Activated CD8-positive, alpha-beta T cell treated with anti-CD3 and anti-CD28 coated beads, Interleukin-2, amount 10 ng/mL, durations not matched to agents 7 days and 5 days (primary cell): ENCODE measurements at regions of chr6 and their contacts with region 1.

Region 1: GRCh38 chr6:90179190-90180169 is 117.2 kb downstream of the BACH2 start:
- DNase-seq: peak; percentile 57
- ATAC-seq: no peak
- H3K4me3 Mint-ChIP-seq: no peak overlapping the region
- H3K27ac Mint-ChIP-seq: peak overlapping the region; percentile 92
- H3K4me1 Mint-ChIP-seq: peaks cover 84% of the 10 kb centered on the region
- H3K27me3 Mint-ChIP-seq: no peaks in the 10 kb centered on the region

Region 2: DNA sequence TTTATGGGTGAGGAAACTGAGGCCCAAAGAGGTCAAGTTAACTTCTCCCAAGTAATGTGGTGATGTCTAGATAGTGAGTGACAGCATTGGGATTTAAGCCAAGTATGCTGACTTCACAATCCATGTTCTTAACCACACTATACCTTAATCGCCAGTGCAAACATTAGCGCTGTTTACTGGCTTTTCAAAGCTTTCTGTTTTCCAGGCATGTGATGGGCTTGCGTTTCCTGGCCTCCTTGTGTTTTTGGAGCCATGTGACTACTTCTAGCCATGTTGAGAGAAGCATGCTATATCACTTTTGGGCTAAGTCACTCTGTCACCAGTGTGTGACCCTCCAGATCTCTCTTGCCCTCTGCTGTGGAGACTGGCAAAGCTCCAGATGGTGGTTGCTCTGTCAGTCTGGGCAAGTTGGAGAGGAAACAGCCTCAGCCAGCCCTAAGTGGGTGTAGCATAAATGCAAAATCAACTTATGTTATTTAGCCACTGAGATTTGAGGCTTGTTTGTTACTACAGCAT is 669.7 kb before region 1 on chr6:
- CTCF ChIA-PET with region 1: no interaction called
- POLR2A ChIA-PET with region 1: no interaction called
- DNase-seq: no peak
- ATAC-seq: no peak
- H3K4me3 Mint-ChIP-seq: no peak overlapping the region
- H3K27ac Mint-ChIP-seq: no peak overlapping the region
- H3K4me1 Mint-ChIP-seq: no peaks in the 10 kb centered on the region
- H3K27me3 Mint-ChIP-seq: peaks cover 3% of the 10 kb centered on the region

Region 3: GRCh38 chr6:90098001-90098531 is 81.4 kb before region 1 on chr6:
- CTCF ChIA-PET with region 1: interaction called, 14 read pairs
- POLR2A ChIA-PET with region 1: no interaction called
- DNase-seq: peak; percentile 57
- ATAC-seq: peak; percentile 29
- H3K4me3 Mint-ChIP-seq: peak overlapping the region; percentile 6
- H3K27ac Mint-ChIP-seq: peak overlapping the region; percentile 77
- H3K4me1 Mint-ChIP-seq: peaks cover 81% of the 10 kb centered on the region
- H3K27me3 Mint-ChIP-seq: no peaks in the 10 kb centered on the region

Region 4: GRCh38 chr6:90107771-90108282 is 71.7 kb before region 1 on chr6:
- CTCF ChIA-PET with region 1: interaction called, 32 read pairs
- POLR2A ChIA-PET with region 1: no interaction called
- DNase-seq: peak; percentile 52
- ATAC-seq: peak; percentile 50
- H3K4me3 Mint-ChIP-seq: peak overlapping the region; percentile 30
- H3K27ac Mint-ChIP-seq: peak overlapping the region; percentile 60
- H3K4me1 Mint-ChIP-seq: peaks cover 93% of the 10 kb centered on the region
- H3K27me3 Mint-ChIP-seq: no peaks in the 10 kb centered on the region

Region 5: GRCh38 chr6:90121982-90122381 is 57.5 kb before region 1 on chr6:
- CTCF ChIA-PET with region 1: interaction called, 32 read pairs
- POLR2A ChIA-PET with region 1: interaction called, 3 read pairs
- DNase-seq: no peak
- ATAC-seq: no peak
- H3K4me3 Mint-ChIP-seq: no peak overlapping the region
- H3K27ac Mint-ChIP-seq: peak overlapping the region; percentile 70
- H3K4me1 Mint-ChIP-seq: peaks cover 69% of the 10 kb centered on the region
- H3K27me3 Mint-ChIP-seq: no peaks in the 10 kb centered on the region

Region 6: GRCh38 chr6:90156861-90157260 is 22.6 kb before region 1 on chr6:
- CTCF ChIA-PET with region 1: interaction called, 15 read pairs
- POLR2A ChIA-PET with region 1: interaction called, 4 read pairs
- DNase-seq: peak; percentile 68
- ATAC-seq: peak; percentile 95
- H3K4me3 Mint-ChIP-seq: peak overlapping the region; percentile 37
- H3K27ac Mint-ChIP-seq: peak overlapping the region; percentile 84
- H3K4me1 Mint-ChIP-seq: peaks cover 70% of the 10 kb centered on the region
- H3K27me3 Mint-ChIP-seq: no peaks in the 10 kb centered on the region

Region 7: DNA sequence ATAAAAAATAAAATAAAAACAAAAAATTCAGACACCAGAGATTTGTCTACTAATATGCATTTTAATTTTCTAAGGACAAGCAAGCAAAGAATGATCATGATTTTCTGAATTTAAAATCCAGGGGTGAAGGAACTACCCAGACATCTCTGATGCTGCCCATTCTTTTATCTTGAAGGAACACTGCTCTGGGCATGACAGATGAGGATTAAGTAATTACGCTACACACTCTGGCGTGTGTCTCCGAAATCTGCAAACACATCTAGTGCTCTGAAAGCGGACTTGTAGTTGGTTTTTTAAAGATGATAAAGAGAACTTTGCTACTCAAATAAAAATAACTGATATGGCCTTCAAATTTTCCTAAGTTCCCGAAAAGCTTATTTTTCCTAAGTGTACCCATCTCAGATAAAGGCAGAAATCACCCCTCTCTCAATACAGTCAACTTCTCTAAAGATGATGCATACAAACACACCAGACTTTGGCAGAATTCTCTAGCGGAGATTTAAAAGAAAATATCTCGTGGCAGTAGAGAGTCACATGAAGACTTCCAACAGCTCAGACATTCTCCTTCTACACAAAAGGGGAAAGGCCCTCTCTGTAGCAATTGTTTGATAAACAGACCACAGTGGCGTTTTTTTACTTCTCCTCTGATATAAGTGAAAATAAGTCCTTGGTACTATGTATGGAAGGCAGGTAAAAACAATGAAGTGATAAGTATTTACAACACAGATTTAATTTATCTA is 16.7 kb before region 1 on chr6:
- CTCF ChIA-PET with region 1: interaction called, 15 read pairs
- POLR2A ChIA-PET with region 1: interaction called, 4 read pairs
- DNase-seq: no peak
- ATAC-seq: no peak
- H3K4me3 Mint-ChIP-seq: no peak overlapping the region
- H3K27ac Mint-ChIP-seq: peak overlapping the region; percentile 2
- H3K4me1 Mint-ChIP-seq: peaks cover 49% of the 10 kb centered on the region
- H3K27me3 Mint-ChIP-seq: no peaks in the 10 kb centered on the region

Region 8: DNA sequence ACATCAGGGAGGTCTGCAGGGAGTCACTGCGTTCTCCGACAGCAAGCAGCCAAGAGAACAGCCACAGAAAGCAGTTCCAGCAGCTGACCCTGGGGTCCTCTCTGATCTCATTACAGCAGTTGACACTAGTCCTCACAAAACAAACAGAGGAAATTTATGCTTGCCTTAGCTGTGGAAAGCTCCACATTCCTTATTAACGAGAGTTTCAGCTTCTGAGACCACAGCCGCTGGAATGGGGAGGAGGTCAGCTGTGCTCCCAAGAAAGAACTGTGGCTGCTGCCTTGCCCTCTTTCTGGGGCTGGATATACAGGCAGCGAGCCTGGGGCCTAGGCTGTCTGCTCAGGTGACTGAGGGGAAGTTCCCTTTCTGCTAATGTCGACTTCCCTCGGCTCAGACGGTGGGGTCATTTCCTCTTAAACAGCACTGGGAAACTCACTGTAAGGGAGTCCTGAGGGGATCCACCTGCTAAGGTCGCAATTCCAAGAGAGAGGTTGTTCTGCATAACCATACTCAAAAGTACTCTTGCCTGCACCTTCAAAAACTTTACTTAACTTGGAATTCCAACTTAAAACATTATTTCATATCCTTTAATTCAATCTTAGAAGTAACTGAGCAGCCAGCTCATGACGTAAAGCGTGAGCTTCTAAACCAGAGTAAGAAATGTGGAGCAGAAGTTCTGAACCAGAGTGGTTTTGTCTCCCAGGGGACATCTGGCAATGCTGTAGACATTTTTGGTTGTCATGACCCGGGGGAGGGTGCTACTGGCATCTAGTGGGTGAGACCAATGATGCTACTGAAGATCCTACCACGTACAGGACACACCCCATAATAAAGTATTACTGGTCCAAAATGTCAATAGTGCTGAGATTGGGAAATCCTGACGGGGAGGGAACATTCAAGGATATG is 36.8 kb after region 1 on chr6:
- CTCF ChIA-PET with region 1: interaction called, 18 read pairs
- POLR2A ChIA-PET with region 1: interaction called, 5 read pairs
- DNase-seq: peak; percentile 59
- ATAC-seq: peak; percentile 25
- H3K4me3 Mint-ChIP-seq: peak overlapping the region; percentile 57
- H3K27ac Mint-ChIP-seq: no peak overlapping the region
- H3K4me1 Mint-ChIP-seq: peaks cover 25% of the 10 kb centered on the region
- H3K27me3 Mint-ChIP-seq: no peaks in the 10 kb centered on the region

Region 9: DNA sequence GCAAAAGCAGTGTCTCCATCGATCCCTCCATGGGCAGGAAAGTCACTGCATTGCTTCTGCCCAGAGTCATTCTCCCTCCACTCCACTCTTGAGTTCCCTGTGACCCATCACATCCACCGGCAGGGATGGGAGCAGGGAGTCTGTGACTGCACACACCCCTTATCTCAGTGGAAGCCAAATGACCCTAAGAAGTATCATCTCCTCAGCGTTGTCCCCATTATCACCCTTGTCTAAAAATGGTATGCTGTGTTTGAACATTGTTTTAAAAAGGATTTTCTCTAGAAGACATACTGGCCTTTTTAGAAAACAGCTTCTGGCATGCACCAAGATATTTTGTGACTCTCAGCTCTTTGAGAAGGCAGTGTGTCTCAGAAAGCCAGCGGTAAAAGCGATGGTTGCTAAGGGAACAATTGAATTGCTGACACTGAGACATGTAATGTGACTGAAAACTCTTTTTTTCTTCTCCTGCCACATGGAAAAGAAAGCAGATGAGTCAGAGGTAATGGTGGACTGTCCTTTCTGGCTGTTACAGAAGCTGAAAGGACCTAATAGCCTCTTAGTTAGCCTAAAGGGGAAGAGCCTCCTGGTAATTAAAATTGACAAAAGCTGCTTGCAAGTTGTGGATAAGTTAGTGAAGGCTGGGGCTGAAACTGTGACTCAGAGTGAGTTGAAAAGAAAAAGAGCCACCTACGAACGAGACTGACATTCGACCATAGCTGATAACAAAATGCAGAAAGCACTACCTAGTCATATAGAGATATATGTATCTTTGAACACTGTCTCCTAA is 286.9 kb after region 1 on chr6:
- CTCF ChIA-PET with region 1: no interaction called
- POLR2A ChIA-PET with region 1: no interaction called
- DNase-seq: no peak
- ATAC-seq: peak; percentile 31
- H3K4me3 Mint-ChIP-seq: peak overlapping the region; percentile 13
- H3K27ac Mint-ChIP-seq: peak overlapping the region; percentile 71
- H3K4me1 Mint-ChIP-seq: peaks cover 88% of the 10 kb centered on the region
- H3K27me3 Mint-ChIP-seq: peaks cover 3% of the 10 kb centered on the region